ENCODE measurements at regions of chr10 and their contacts with region 1.

Region 1: DNA sequence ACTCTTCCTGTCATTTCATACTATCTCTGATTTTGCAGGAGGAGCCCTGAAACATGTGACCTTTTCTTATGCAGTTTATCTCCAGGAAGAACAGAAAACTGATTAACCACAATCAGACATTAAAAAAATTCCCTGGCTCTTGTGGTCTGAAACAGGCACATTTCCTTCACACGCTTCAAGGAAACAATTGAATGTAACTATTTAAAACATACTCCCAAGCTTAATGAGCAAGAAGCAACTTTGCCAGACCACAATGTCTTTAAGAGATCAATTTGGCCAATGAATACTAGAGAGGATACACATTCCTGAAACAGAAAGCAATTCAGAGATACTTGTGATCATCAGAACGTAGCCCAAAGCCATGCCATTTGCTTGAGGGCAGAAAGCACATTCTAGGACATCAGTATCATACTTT is 65.8 kb downstream of the PIP4K2A start:
- DNase-seq: peak; percentile 75
- ATAC-seq: peak; percentile 72
- H3K4me3 ChIP-seq: no peak overlapping the region
- H3K27ac ChIP-seq: peak overlapping the region; percentile 78
- H3K4me1 ChIP-seq: peaks cover 83% of the 10 kb centered on the region
- H3K27me3 ChIP-seq: no peaks in the 10 kb centered on the region
- CTCF ChIP-seq: no peak
- EP300 ChIP-seq: peak; percentile 32 to 50; a peak in 2 of 4 replicates
- POLR2A ChIP-seq: no peak
- RAD21 ChIP-seq: no peak

Region 2: GRCh38 chr10:22356333-22356873 is 292.2 kb before region 1 on chr10:
- CTCF ChIA-PET with region 1: no interaction called
- POLR2A ChIA-PET with region 1: no interaction called
- RAD21 ChIA-PET with region 1: no interaction called
- SMC1A ChIA-PET with region 1: no interaction called
- in situ Hi-C with region 1: no loop called
- intact Hi-C with region 1: no loop called
- DNase-seq: no peak
- ATAC-seq: no peak
- H3K4me3 ChIP-seq: no peak overlapping the region
- H3K27ac ChIP-seq: no peak overlapping the region
- H3K4me1 ChIP-seq: no peaks in the 10 kb centered on the region
- H3K27me3 ChIP-seq: no peaks in the 10 kb centered on the region
- CTCF ChIP-seq: no peak
- EP300 ChIP-seq: no peak
- POLR2A ChIP-seq: no peak
- RAD21 ChIP-seq: no peak

Region 3: DNA sequence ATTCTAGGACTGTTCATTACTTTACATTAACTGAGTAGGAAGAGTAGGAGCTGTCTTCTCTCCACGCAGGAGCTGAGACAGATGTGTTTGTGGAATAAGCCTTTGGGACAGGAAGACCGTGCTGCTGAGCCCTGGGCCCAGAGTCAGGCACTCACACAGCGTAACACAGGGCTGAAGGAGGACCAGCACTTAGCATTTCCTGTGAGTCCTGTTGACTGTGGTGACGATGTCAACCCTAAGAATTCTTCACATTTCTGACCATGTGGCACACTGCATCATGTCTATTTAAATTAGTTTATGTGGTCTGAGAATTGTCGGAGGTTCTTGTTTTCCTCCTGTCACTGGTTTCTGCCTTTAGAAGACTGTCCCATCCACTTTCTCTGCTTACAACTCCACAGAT is 51.4 kb before region 1 on chr10:
- CTCF ChIA-PET with region 1: interaction called, 3 read pairs
- POLR2A ChIA-PET with region 1: interaction called, 9 read pairs
- RAD21 ChIA-PET with region 1: interaction called, 11 read pairs
- SMC1A ChIA-PET with region 1: interaction called, 11 read pairs
- in situ Hi-C with region 1: no loop called
- intact Hi-C with region 1: no loop called
- DNase-seq: peak; percentile 55
- ATAC-seq: peak; percentile 60
- H3K4me3 ChIP-seq: no peak overlapping the region
- H3K27ac ChIP-seq: peak overlapping the region; percentile 68
- H3K4me1 ChIP-seq: peaks cover 49% of the 10 kb centered on the region
- H3K27me3 ChIP-seq: no peaks in the 10 kb centered on the region
- CTCF ChIP-seq: no peak
- EP300 ChIP-seq: no peak
- POLR2A ChIP-seq: peak; percentile 43; the same call in 1 of the 2 replicates
- RAD21 ChIP-seq: no peak

Region 4: GRCh38 chr10:22615819-22616499 is 32.6 kb before region 1 on chr10:
- CTCF ChIA-PET with region 1: interaction called, 4 read pairs
- POLR2A ChIA-PET with region 1: interaction called, 5 read pairs
- RAD21 ChIA-PET with region 1: interaction called, 15 read pairs
- SMC1A ChIA-PET with region 1: interaction called, 21 read pairs
- in situ Hi-C with region 1: no loop called
- intact Hi-C with region 1: no loop called
- DNase-seq: peak; percentile 35
- ATAC-seq: peak; percentile 91
- H3K4me3 ChIP-seq: peak overlapping the region; percentile 54; the same call in 1 of the 2 replicates
- H3K27ac ChIP-seq: peak overlapping the region; percentile 73
- H3K4me1 ChIP-seq: peaks cover 57% of the 10 kb centered on the region
- H3K27me3 ChIP-seq: no peaks in the 10 kb centered on the region
- CTCF ChIP-seq: no peak
- EP300 ChIP-seq: no peak
- POLR2A ChIP-seq: peak; percentile 67
- RAD21 ChIP-seq: no peak

Region 5: GRCh38 chr10:22630234-22631174 is 18.1 kb before region 1 on chr10:
- CTCF ChIA-PET with region 1: interaction called, 72 read pairs
- POLR2A ChIA-PET with region 1: interaction called, 24 read pairs
- RAD21 ChIA-PET with region 1: interaction called, 99 read pairs
- SMC1A ChIA-PET with region 1: interaction called, 172 read pairs
- in situ Hi-C with region 1: no loop called
- intact Hi-C with region 1: loop called (anchors 2 kb)
- DNase-seq: peak; percentile 92
- ATAC-seq: peak; percentile 89
- H3K4me3 ChIP-seq: peak overlapping the region; percentile 57
- H3K27ac ChIP-seq: peak overlapping the region; percentile 89
- H3K4me1 ChIP-seq: peaks cover 42% of the 10 kb centered on the region
- H3K27me3 ChIP-seq: no peaks in the 10 kb centered on the region
- CTCF ChIP-seq: no peak
- EP300 ChIP-seq: peak; percentile 70; a peak in 3 of 4 replicates
- POLR2A ChIP-seq: no peak
- RAD21 ChIP-seq: 0 out of 2 replicates have a peak, but pooled peaks have one; percentile 13

Region 6: GRCh38 chr10:22666287-22667092 is 17.9 kb after region 1 on chr10:
- CTCF ChIA-PET with region 1: interaction called, 4 read pairs
- POLR2A ChIA-PET with region 1: interaction called, 8 read pairs
- RAD21 ChIA-PET with region 1: interaction called, 71 read pairs
- SMC1A ChIA-PET with region 1: interaction called, 91 read pairs
- in situ Hi-C with region 1: no loop called
- intact Hi-C with region 1: no loop called
- DNase-seq: no peak
- ATAC-seq: peak; percentile 77
- H3K4me3 ChIP-seq: peak overlapping the region; percentile 39; the same call in 1 of the 2 replicates
- H3K27ac ChIP-seq: peak overlapping the region; percentile 50
- H3K4me1 ChIP-seq: peaks cover 27% of the 10 kb centered on the region
- H3K27me3 ChIP-seq: no peaks in the 10 kb centered on the region
- CTCF ChIP-seq: no peak
- EP300 ChIP-seq: no peak
- POLR2A ChIP-seq: no peak
- RAD21 ChIP-seq: no peak

Region 7: DNA sequence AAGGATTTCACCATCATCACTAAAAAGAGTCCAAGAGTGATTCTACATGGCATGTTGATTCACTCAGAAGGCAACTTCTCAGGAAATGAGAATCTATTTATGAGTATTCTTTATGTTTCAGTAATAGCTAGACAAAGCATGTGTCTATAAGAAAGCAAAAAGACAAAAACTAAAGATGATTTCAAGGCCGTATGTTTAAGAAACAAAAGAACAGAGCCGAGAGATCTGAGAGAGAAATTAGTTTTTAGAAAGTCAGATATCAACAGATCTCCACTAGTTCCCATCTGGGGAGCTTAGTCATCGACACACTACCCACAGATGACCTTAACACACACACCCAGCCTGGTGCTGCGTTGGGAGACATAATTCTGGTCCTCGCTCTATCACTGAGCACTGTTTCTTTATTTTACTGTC is 44.8 kb after region 1 on chr10:
- CTCF ChIA-PET with region 1: interaction called, 10 read pairs
- POLR2A ChIA-PET with region 1: interaction called, 3 read pairs
- RAD21 ChIA-PET with region 1: interaction called, 6 read pairs
- SMC1A ChIA-PET with region 1: interaction called, 9 read pairs
- in situ Hi-C with region 1: no loop called
- intact Hi-C with region 1: no loop called
- DNase-seq: no peak
- ATAC-seq: peak; percentile 45
- H3K4me3 ChIP-seq: no peak overlapping the region; the same call in 1 of the 2 replicates
- H3K27ac ChIP-seq: peak overlapping the region; percentile 63
- H3K4me1 ChIP-seq: peaks cover 25% of the 10 kb centered on the region
- H3K27me3 ChIP-seq: no peaks in the 10 kb centered on the region
- CTCF ChIP-seq: no peak
- EP300 ChIP-seq: no peak
- POLR2A ChIP-seq: no peak
- RAD21 ChIP-seq: no peak

Region 8: DNA sequence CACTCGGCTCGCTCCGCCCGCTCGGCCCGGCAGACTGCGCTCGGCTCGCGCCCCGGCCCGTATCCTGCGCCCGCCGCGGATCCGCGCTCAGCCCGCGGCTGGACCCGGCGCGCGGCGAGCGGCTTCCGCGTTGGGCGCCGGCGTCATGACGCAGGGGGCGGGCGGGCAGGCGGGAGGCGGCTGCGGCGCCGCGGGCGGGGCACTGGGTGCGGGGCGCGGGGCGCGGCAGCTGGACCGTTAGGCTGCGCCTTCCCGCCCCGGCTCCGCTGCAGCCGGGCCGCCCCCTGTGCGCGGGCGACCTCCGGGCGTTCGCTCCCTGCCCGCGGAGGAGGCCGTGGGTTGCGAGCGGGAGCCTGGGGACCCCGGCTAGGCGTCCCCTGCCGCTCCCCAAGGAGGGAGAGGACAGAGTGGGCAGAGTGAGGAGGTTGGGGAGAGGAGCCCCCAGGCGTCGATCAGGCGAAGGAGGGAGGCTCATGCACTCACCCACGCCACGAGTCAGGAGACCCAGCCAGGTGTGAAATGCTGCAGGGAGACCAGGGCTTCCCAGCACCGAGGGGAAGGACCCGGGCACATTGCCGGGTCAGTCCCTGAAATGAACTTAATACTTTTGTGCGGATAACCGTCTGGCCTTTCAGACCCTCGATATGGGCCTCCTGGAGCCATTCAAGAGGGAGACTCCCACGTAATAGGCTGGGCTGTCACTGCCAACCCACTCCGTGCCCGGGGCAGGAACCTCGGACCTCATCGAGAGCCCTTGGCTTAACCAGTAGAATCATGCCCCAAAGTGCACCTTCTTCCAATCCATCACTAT is 66.1 kb after region 1 on chr10 and contains the start of gene PIP4K2A:
- CTCF ChIA-PET with region 1: interaction called, 8 read pairs
- POLR2A ChIA-PET with region 1: interaction called, 8 read pairs
- RAD21 ChIA-PET with region 1: interaction called, 22 read pairs
- SMC1A ChIA-PET with region 1: interaction called, 72 read pairs
- in situ Hi-C with region 1: no loop called
- intact Hi-C with region 1: loop called (anchors 5 kb)
- DNase-seq: no peak
- ATAC-seq: peak; percentile 63
- H3K4me3 ChIP-seq: peak within 1 kb of the TSS; percentile 75
- H3K27ac ChIP-seq: peak within 1 kb of the TSS; percentile 81
- H3K4me1 ChIP-seq: peaks cover 7% of the 10 kb centered on the region
- H3K27me3 ChIP-seq: no peaks in the 10 kb centered on the region
- CTCF ChIP-seq: no peak
- EP300 ChIP-seq: no peak
- POLR2A ChIP-seq: peak; percentile 84
- RAD21 ChIP-seq: no peak
- polyA plus RNA-seq, gene PIP4K2A: 54.3 to 103 TPM